GM12878 (cell line): ENCODE measurements at regions of chr1 and their contacts with region 1.

Region 1: DNA sequence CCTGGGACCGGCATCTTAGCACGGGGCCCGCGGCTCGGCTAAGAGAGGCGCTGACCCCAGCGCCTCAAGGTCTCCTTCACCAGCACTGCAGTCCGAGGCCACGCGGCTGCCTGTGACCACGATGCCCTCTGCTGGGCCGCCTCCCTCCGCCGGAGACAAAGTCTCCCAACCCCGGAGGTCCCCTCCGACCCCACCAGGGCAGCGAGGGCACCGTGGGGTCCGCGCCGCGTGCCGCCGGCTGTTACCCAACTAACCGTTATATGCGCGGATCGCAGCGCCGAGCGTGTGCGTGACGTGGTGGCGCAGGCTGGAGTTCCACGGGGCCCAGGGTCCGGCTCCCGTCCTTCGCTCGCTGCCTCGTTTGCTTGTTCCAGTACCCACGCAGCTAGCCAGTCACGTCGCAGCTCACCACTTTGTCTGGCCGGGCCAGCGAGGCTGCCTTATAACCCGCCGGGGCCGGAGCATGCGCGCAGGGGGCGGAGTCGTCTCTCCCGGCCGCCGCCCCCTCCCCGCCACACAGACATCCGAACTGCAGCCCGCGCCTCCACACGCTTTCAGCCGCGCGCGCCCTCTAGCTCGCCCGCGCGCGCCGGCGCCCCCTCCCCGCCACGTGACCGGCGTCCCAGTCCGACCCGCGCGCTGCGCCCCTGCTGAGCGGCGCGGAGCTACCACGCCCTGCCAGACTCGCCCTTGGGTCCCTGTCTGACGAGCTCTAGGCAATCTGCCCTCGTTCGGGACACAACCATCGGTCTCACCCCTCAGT is at the start of gene SLC16A1:
- DNase-seq: peak; percentile 66
- ATAC-seq: peak; percentile 81
- H3K4me3 ChIP-seq: peak within 1 kb of the TSS; percentile 82
- H3K27ac ChIP-seq: peak within 1 kb of the TSS; percentile 93
- H3K4me1 ChIP-seq: no peaks in the 10 kb centered on the region
- H3K27me3 ChIP-seq: no peaks in the 10 kb centered on the region
- CTCF ChIP-seq: peak; percentile 4 to 43 (median 22); a peak in 3 of 6 replicates
- EP300 ChIP-seq: no peak
- POLR2A ChIP-seq: peak; percentile 100
- RAD21 ChIP-seq: peak; percentile 24; the same call in 1 of the 2 replicates
- polyA plus RNA-seq, gene SLC16A1: 40.1 to 45.2 TPM

Region 2: GRCh38 chr1:112762541-112763517 is 193.1 kb before region 1 on chr1:
- CTCF ChIA-PET with region 1: no interaction called
- POLR2A ChIA-PET with region 1: no interaction called
- RAD21 ChIA-PET with region 1: no interaction called
- SMC1A ChIA-PET with region 1: no interaction called
- in situ Hi-C with region 1: no loop called
- intact Hi-C with region 1: no loop called
- DNase-seq: no peak
- ATAC-seq: peak; percentile 23; the same call in 1 of the 3 replicates
- H3K4me3 ChIP-seq: no peak overlapping the region
- H3K27ac ChIP-seq: no peak overlapping the region
- H3K4me1 ChIP-seq: no peaks in the 10 kb centered on the region
- H3K27me3 ChIP-seq: peaks cover 0 to 2% of the 10 kb centered on the region in 2 experiments; a peak in 1 of 4 replicates
- CTCF ChIP-seq: no peak
- EP300 ChIP-seq: no peak
- POLR2A ChIP-seq: no peak
- RAD21 ChIP-seq: no peak

Region 3: DNA sequence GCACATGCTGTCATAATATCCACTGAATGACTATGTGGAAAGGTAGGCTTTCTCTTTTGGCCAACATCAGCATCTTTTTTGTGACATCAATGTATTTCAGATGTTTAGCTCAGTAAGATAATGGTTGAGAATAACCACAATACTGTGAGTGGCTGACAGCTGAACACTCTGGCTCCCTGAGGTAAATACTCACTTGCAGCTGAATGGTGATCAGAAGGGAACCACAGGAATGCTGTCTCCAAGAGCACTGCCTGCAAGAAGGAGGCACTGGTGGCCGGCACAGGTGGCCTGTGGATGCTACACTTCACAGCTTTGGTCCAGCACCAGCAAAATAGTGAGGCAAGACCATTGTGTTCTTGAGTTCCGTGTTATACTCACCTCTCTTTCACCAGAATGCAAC is 122.2 kb before region 1 on chr1:
- CTCF ChIA-PET with region 1: no interaction called
- POLR2A ChIA-PET with region 1: no interaction called
- RAD21 ChIA-PET with region 1: no interaction called
- SMC1A ChIA-PET with region 1: no interaction called
- in situ Hi-C with region 1: no loop called
- intact Hi-C with region 1: no loop called
- DNase-seq: no peak
- ATAC-seq: no peak
- H3K4me3 ChIP-seq: no peak overlapping the region
- H3K27ac ChIP-seq: no peak overlapping the region
- H3K4me1 ChIP-seq: no peaks in the 10 kb centered on the region
- H3K27me3 ChIP-seq: no peaks in the 10 kb centered on the region; a peak in 1 of 4 replicates
- CTCF ChIP-seq: no peak
- EP300 ChIP-seq: no peak
- POLR2A ChIP-seq: no peak
- RAD21 ChIP-seq: no peak

Region 4: GRCh38 chr1:112935461-112936289 is 20.3 kb before region 1 on chr1:
- CTCF ChIA-PET with region 1: interaction called, 46 read pairs
- POLR2A ChIA-PET with region 1: interaction called, 25 read pairs
- RAD21 ChIA-PET with region 1: interaction called, 53 read pairs
- SMC1A ChIA-PET with region 1: interaction called, 80 read pairs
- in situ Hi-C with region 1: no loop called
- intact Hi-C with region 1: no loop called
- DNase-seq: no peak
- ATAC-seq: no peak
- H3K4me3 ChIP-seq: no peak overlapping the region
- H3K27ac ChIP-seq: no peak overlapping the region
- H3K4me1 ChIP-seq: 0 out of 2 replicates have a peak, but pooled peaks cover 4% of the 10 kb centered on the region
- H3K27me3 ChIP-seq: no peaks in the 10 kb centered on the region
- CTCF ChIP-seq: no peak
- EP300 ChIP-seq: no peak
- POLR2A ChIP-seq: no peak
- RAD21 ChIP-seq: no peak

Region 5: DNA sequence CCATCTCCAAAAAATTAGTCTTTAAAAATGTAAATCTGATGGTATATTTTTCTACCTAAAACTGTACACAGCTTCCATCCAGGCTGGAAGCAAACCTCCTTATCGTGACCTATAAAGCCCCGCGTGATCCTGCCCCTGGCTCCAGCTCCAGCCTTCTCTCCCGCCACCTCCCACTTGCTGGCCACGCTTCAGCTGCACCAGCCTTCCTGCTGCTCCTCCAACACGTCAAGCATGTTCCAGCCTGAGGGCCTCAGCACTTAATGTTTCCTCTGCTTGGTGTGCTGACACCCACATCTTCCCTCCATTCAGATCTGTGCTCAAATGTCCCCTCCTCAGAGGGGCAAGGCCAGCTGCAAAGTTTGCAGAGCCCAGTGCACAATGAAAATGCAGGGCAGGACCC is 310.8 kb after region 1 on chr1:
- CTCF ChIA-PET with region 1: no interaction called
- POLR2A ChIA-PET with region 1: no interaction called
- RAD21 ChIA-PET with region 1: no interaction called
- SMC1A ChIA-PET with region 1: no interaction called
- in situ Hi-C with region 1: no loop called
- intact Hi-C with region 1: no loop called
- DNase-seq: no peak
- ATAC-seq: no peak
- H3K4me3 ChIP-seq: no peak overlapping the region
- H3K27ac ChIP-seq: no peak overlapping the region
- H3K4me1 ChIP-seq: no peaks in the 10 kb centered on the region
- H3K27me3 ChIP-seq: no peaks in the 10 kb centered on the region; a peak in 2 of 4 replicates
- CTCF ChIP-seq: no peak
- EP300 ChIP-seq: no peak
- POLR2A ChIP-seq: no peak
- RAD21 ChIP-seq: no peak

Region 6: GRCh38 chr1:114745291-114745690 is 1789.3 kb after region 1 on chr1:
- CTCF ChIA-PET with region 1: no interaction called
- POLR2A ChIA-PET with region 1: no interaction called
- RAD21 ChIA-PET with region 1: no interaction called
- SMC1A ChIA-PET with region 1: no interaction called
- in situ Hi-C with region 1: loop called (anchors 25 kb)
- intact Hi-C with region 1: no loop called
- DNase-seq: no peak
- ATAC-seq: peak; percentile 21
- H3K4me3 ChIP-seq: no peak overlapping the region
- H3K27ac ChIP-seq: no peak overlapping the region
- H3K4me1 ChIP-seq: no peaks in the 10 kb centered on the region
- H3K27me3 ChIP-seq: no peaks in the 10 kb centered on the region
- CTCF ChIP-seq: no peak
- EP300 ChIP-seq: no peak
- POLR2A ChIP-seq: no peak
- RAD21 ChIP-seq: no peak